Panc1 (cell line): ENCODE measurements at regions of chr14 and their contacts with region 1.

Region 1: GRCh38 chr14:58072288-58073071 is 79.5 kb downstream of the ARMH4 start:
- DNase-seq: peak; percentile 42
- ATAC-seq: peak; percentile 87
- H3K4me3 ChIP-seq: peak overlapping the region in 1 of 2 experiments; percentile 16; a peak in 1 of 4 replicates
- H3K27ac ChIP-seq: no peak overlapping the region
- H3K4me1 ChIP-seq: no peaks in the 10 kb centered on the region
- H3K27me3 ChIP-seq: no peaks in the 10 kb centered on the region
- CTCF ChIP-seq: peak; percentile 75

Region 2: DNA sequence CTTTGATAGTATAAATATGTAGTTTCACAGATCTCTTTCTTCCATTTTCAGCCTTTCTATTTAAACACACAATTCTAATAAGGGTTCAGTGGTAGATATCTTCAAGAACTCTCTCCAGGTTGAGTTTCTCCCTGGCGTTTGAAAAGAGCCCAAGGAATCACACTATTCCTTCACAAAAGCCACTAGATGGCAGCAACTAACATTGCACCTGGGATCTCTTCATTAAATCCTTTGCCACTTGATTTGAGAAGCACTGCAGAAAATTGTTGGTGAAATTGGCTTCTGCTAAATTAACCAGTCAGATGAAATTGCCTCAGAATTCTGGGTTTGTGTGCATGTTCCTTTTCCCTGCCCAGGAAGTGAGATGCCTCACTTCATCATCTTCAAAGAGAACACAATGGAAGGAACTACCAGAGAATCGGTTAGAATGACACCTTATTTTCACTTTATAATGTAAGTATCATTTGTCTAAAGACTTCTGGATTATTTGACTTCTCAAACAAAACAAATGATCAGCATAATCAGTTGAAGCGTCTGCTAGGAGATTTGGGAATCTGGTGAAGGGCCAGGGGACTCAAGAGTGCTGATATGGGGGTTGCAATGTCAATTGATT is 585.6 kb before region 1 on chr14:
- CTCF ChIA-PET with region 1: no interaction called
- POLR2A ChIA-PET with region 1: no interaction called
- in situ Hi-C with region 1: no loop called
- intact Hi-C with region 1: loop called (anchors 2 kb)
- DNase-seq: no peak
- ATAC-seq: no peak
- H3K4me3 ChIP-seq: no peak overlapping the region
- H3K27ac ChIP-seq: no peak overlapping the region
- H3K4me1 ChIP-seq: no peaks in the 10 kb centered on the region
- H3K27me3 ChIP-seq: no peaks in the 10 kb centered on the region
- CTCF ChIP-seq: peak; percentile 72

Region 3: DNA sequence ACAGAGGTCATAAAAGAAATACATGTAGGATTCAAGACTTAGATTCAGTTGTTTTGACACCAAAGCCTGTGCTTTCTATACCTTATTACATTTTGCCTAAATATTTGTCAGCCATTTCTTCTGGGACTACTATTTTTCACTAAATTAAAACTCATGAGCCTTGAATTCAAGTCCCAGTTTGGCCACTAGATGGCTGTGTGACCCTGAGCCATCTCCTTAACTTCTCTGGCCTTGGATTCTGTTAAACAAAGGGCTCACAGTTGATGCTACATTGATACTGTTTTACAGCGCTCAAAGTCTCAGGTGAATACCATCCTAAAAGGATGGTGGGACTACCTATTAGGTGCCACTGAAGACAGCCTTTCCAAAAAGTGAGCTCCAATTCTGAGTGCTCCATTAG is 539.3 kb before region 1 on chr14:
- CTCF ChIA-PET with region 1: no interaction called
- POLR2A ChIA-PET with region 1: no interaction called
- in situ Hi-C with region 1: no loop called
- intact Hi-C with region 1: loop called (anchors 5 kb)
- DNase-seq: peak; percentile 27
- ATAC-seq: peak; percentile 66; the same call in 1 of the 2 replicates
- H3K4me3 ChIP-seq: no peak overlapping the region
- H3K27ac ChIP-seq: no peak overlapping the region
- H3K4me1 ChIP-seq: no peaks in the 10 kb centered on the region
- H3K27me3 ChIP-seq: no peaks in the 10 kb centered on the region
- CTCF ChIP-seq: peak; percentile 61